Posterior vena cava (tissue), 2 donors: ENCODE measurements at regions of chr14 and their contacts with region 1.

Region 1: DNA sequence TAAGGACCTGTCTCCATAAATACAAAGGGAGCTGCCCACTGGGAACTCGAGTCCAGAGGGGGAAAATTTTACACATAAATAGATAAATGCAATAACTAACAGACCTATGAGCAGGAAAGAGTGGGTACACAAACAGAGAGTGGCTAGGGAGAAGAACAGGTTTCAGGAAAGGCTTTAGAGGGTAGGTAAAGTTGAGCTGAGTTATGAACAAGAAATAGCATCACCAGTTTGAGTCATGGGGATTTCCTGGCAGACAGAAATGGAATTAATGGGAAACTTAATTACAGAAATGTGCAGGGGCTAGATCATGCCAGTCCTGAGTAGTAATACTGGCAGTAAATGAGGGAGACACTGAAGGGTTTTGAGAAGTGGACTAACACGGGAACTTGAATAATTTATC is 58.0 kb upstream of the CCDC175 start:
- DNase-seq: no peak

Region 2: GRCh38 chr14:59454131-59454530 is 180.5 kb before region 1 on chr14:
- intact Hi-C with region 1: no loop called
- DNase-seq: no peak

Region 3: GRCh38 chr14:59664741-59665140 is 30.1 kb after region 1 on chr14:
- intact Hi-C with region 1: loop called in 1 of 2 experiments (anchors 2 kb)
- DNase-seq: no peak

Region 4: GRCh38 chr14:59707778-59708561 is 73.4 kb after region 1 on chr14:
- intact Hi-C with region 1: no loop called
- DNase-seq: no peak

Region 5: DNA sequence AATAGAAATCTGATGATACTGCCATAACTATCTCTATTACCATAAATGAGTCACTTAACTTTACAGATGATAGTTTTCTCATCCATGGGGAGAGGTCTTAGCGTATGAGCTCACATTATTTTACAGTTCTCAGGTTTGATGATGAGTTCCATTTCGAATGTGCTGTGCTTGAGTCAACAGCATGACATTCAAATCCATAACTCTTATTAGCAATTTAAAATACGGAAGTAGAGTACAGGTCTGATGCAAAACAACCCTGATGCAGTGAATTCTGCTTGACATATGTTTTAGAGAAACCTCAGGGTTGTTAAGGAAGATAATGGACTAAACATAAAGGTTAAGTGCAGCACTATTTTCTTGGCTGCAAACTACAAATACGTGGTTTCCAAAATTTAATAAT is 821.3 kb after region 1 on chr14:
- intact Hi-C with region 1: no loop called
- DNase-seq: no peak